Adrenal gland (tissue), 19 donors: ENCODE measurements at regions of chr10 and their contacts with region 1.

Region 1: GRCh38 chr10:111360260-111360925 is 283.6 kb downstream of the ADRA2A start:
- DNase-seq: peak; percentile 23 to 68 (median 34)
- H3K4me3 ChIP-seq: no peak overlapping the region
- H3K27ac ChIP-seq: no peak overlapping the region
- H3K4me1 ChIP-seq: no peaks in the 10 kb centered on the region
- H3K27me3 ChIP-seq: no peaks in the 10 kb centered on the region
- CTCF ChIP-seq: peak; percentile 29 to 52 (median 50)
- POLR2A ChIP-seq: no peak

Region 2: GRCh38 chr10:111076191-111076681 is 284.2 kb before region 1 on chr10:
- intact Hi-C with region 1: loop called in 1 of 2 experiments (anchors 10 kb)
- DNase-seq: peak; percentile 43 to 76 (median 63)
- H3K4me3 ChIP-seq: peak overlapping the region in 2 of 4 donors; percentile 37 to 51
- H3K27ac ChIP-seq: no peak overlapping the region
- H3K4me1 ChIP-seq: peaks cover 5 to 23% of the 10 kb centered on the region in 2 donors
- H3K27me3 ChIP-seq: peaks cover 43% of the 10 kb centered on the region
- CTCF ChIP-seq: peak; percentile 56 to 78 (median 68)
- POLR2A ChIP-seq: no peak